ENCODE measurements at regions of chrX and their contacts with region 1.

Region 1: GRCh38 chrX:63718010-63718694 is 66.9 kb downstream of the ARHGEF9 start:
- DNase-seq: no peak
- ATAC-seq: peak in 3 of 4 donors; percentile 45 to 70 (median 56)
- H3K4me3 ChIP-seq: no peak overlapping the region
- H3K27ac ChIP-seq: peak overlapping the region in 3 of 12 donors; percentile 6 to 43 (median 20)
- H3K4me1 ChIP-seq: peaks cover 0 to 19% (median 0%) of the 10 kb centered on the region in 12 donors
- H3K27me3 ChIP-seq: no peaks in the 10 kb centered on the region
- CTCF ChIP-seq: no peak
- POLR2A ChIP-seq: no peak

Region 2: DNA sequence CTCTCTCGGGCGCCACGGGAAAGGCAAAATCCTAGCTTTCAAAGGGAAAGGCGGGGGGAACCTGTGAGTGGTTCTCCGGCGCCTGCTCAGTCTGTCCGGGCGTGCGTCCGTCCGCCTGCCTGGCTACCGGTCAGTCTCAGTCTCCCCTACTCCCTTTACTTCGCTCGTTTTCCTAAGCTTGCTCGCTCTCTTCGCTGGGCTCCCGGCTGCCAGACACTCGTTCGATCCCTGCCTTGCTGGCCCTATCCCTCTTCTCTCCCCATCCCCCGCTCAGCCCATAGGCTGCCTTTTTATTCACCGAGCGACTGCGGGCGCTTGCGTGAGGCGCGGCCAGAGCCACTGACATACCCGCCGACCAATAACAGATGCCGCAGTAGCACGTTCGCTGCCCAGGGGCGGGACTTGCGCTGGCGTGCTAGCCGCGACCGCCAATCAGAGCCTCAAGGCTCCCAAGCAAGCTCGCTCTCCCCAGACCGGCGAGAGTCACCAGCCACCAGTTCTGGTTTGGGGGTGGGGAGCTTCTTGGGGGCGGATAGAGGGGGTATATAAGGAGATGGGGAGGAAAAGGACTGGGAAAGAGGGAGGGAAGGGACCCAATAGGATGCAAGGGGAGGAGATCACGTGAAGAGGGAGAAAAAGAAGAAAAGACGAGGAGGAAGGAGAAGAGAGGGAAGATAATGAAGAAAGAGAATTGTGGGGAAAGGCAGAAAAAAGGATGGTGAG is 36.9 kb after region 1 on chrX:
- intact Hi-C with region 1: loop called in 2 of 10 experiments (anchors 5 kb)
- DNase-seq: peak; percentile 91 to 95 (median 94)
- ATAC-seq: peak; percentile 97 to 99 (median 98)
- H3K4me3 ChIP-seq: peak overlapping the region; percentile 8 to 89 (median 68)
- H3K27ac ChIP-seq: peak overlapping the region; percentile 67 to 96 (median 90)
- H3K4me1 ChIP-seq: peaks cover 0 to 27% (median 4%) of the 10 kb centered on the region in 12 donors
- H3K27me3 ChIP-seq: peaks cover 0 to 4% (median 0%) of the 10 kb centered on the region in 9 donors
- CTCF ChIP-seq: no peak
- POLR2A ChIP-seq: peak; percentile 27 to 84

Region 3: DNA sequence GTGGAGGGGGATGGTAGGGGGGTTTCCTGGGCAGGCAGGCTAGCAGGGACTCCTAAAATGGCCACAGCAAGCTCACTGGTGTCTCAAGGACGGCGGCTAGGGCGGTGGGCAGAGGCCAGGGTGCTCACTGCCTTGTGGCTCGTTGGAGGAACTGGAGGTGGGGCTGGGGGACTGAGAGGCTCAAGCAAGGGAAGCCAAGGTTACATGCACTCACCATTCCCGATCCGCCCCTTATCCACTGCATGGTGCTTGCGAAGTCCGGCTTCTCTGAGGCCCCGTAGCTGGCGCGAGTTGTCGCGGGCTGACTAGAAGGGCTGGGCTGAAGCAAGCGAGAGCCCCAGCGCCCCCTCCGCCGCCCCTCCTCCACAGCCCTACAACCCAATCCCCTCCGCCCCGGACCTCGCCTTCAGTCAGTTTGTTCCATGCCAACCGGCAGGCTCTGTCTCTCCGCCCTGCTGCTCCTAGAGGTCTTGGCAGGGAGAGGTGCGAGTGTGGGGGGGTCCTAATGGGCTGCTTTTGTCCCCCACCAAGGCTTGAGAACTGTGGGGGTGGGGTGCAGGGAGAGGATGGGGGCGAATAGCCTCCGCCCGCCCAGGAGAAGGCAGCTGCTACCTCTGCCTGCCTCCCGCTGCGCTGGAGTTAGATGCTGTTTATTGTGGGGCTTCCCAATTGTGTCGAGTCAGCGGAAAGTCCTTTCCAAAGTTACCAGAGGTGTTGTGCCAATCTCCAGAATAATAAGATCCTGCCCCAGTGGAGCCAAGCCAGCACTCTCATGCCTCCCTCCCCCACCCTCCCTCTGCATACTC is 67.0 kb after region 1 on chrX and contains the start of gene ARHGEF9:
- intact Hi-C with region 1: loop called in 1 of 10 experiments (anchors 10 kb)
- DNase-seq: peak in 4 of 5 donors; percentile 12 to 35 (median 25)
- ATAC-seq: peak; percentile 58 to 86 (median 80)
- H3K4me3 ChIP-seq: peak within 1 kb of the TSS; percentile 7 to 62 (median 52)
- H3K27ac ChIP-seq: peak within 1 kb of the TSS in 8 of 12 donors; percentile 18 to 58 (median 52)
- H3K4me1 ChIP-seq: peaks cover 0 to 4% (median 0%) of the 10 kb centered on the region in 12 donors
- H3K27me3 ChIP-seq: peaks cover 0 to 11% (median 0%) of the 10 kb centered on the region in 9 donors
- CTCF ChIP-seq: no peak
- POLR2A ChIP-seq: no peak
- total RNA-seq, gene ARHGEF9: 34.4 to 57.7 (median 41.9) TPM